ENCODE measurements at regions of chr20 and their contacts with region 1.

Region 1: DNA sequence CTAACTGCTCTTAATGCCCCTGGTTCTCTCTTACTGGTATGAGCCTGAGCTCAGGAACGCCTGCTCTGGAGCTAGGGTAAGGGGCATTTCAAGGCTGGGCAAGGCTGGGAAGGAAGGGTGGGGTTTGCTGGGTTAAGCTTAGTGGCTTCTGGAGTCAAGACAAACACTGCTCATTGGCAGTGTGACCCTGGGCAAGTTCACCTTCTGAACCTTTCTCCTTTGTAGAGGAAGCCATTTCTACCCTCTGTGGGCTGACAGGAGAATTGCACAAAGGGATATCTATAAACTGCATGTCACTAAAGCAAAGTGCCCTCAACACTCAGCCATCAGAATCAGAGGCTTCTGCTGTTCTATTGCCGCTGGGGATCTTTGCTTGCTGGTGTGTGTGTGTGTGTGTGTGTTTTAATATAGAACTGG is 20.3 kb upstream of the LRRN4 start:
- DNase-seq: no peak
- ATAC-seq: no peak
- H3K4me3 ChIP-seq: no peak overlapping the region
- H3K4me1 ChIP-seq: no peaks in the 10 kb centered on the region
- CTCF ChIP-seq: no peak

Region 2: GRCh38 chr20:5529331-5530148 is 544.6 kb before region 1 on chr20:
- intact Hi-C with region 1: loop called (anchors 5 kb)
- DNase-seq: peak; percentile 89 to 96 (median 95)
- ATAC-seq: peak; percentile 94
- H3K4me3 ChIP-seq: no peak overlapping the region
- H3K4me1 ChIP-seq: no peaks in the 10 kb centered on the region
- CTCF ChIP-seq: peak; percentile 74

Region 3: DNA sequence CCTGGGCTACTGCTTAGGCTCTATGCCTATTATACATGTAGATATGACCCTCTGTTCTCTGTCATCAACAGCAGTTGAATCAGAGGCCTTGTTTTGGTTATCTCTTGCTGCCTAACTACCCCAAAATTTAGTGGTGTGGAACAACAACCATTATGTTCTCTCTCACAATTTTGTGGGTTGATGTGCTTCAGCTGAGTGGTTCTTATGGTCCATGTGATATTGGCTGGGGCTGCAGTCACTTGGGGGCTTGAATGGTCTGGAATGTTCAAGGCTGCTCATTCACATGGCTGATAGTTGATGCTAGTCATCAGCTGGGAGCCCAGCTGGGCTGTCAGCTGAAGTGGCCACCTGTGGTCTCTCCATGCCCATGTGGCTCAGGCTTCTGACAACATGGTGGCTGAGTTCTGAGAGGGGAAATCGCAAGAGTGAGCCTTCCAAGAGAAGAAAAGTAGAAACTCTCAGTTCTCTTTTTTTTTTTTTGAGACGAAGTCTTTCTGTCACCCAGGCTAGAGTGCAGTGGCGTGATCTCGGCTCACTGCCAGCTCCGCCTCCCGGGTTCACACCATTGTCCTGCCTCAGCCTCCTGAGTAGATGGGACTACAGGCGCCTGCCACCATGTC is 276.2 kb before region 1 on chr20:
- intact Hi-C with region 1: loop called in 1 of 2 experiments (anchors 10 kb)
- DNase-seq: no peak
- ATAC-seq: peak; percentile 58
- H3K4me3 ChIP-seq: no peak overlapping the region
- H3K4me1 ChIP-seq: peaks cover 12% of the 10 kb centered on the region
- CTCF ChIP-seq: no peak